ENCODE measurements at regions of chr6 and their contacts with region 1.

Region 1: GRCh38 chr6:100300221-100300736 is 164.4 kb downstream of the SIM1 start:
- DNase-seq: peak; percentile 85
- H3K4me3 ChIP-seq: no peak overlapping the region
- H3K27ac ChIP-seq: peak overlapping the region; percentile 100
- H3K4me1 ChIP-seq: peaks cover 74% of the 10 kb centered on the region
- H3K27me3 ChIP-seq: no peaks in the 10 kb centered on the region
- CTCF ChIP-seq: no peak
- POLR2A ChIP-seq: peak; percentile 29

Region 2: DNA sequence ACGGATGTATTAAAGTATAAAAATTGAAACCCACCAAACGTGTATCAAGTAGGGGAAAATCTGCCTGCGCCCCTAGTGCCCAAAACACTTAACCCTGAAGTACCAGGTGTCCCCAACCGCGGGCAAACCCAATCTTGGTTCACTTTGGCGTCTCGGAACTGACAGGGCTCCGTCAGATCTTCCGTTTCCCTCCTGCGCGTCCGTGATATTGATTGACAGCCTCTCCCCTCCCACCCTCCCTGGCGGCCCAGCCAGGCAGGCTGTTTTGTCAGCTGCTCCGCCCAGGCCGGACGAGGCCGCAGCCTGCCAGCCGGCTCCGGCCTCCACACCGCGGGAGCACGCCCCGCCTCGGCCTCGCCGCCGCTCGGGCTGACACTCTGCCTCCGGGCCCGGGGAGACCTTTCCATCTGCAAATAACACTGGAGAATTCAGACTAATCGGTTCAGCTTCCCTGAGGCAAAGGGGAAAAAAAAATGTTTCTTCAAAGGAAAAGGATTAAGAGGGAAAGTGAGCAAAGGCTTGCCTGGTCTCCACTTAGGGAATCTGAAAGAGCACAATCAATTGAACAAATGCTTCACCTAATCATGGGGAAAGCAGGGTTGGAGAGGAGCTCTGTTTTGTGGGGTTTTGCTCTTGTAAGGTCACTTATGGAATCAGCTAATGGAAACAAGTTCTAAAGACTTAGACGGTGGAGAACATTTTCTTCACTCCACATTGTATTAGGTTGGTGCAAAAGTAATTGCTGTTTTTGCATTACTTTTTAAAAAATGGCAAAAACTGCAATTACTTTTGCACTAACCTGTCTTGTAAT is 71.2 kb before region 1 on chr6:
- CTCF ChIA-PET with region 1: interaction called, 3 read pairs
- POLR2A ChIA-PET with region 1: interaction called, 4 read pairs
- dilution Hi-C with region 1: no loop called
- intact Hi-C with region 1: loop called (anchors 1 kb)
- DNase-seq: peak; percentile 86
- H3K4me3 ChIP-seq: peak overlapping the region; percentile 10 to 65 (median 28)
- H3K27ac ChIP-seq: peak overlapping the region; percentile 81
- H3K4me1 ChIP-seq: peaks cover 35% of the 10 kb centered on the region
- H3K27me3 ChIP-seq: no peaks in the 10 kb centered on the region
- CTCF ChIP-seq: no peak
- POLR2A ChIP-seq: peak; percentile 70

Region 3: DNA sequence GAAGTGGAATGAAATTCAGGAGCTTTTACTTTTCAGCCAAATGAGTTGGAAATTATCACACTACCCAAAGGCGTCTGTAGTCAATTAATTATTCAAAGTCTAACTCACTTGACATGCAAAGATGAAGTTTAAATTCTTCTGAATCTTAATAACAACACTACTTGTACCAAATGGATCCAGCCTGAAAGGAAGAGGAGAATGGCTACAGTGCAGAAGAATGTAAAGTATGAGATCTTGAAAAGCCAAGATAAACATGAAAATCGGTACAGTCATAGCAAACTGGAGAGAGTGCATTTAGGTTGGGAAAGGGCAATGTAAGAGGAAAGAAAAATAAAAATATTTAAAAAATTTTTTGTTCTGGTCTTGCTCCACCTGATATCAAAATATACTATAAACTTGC is 31.1 kb before region 1 on chr6:
- CTCF ChIA-PET with region 1: interaction called, 6 read pairs
- POLR2A ChIA-PET with region 1: no interaction called
- dilution Hi-C with region 1: no loop called
- intact Hi-C with region 1: loop called (anchors 1 kb)
- DNase-seq: peak; percentile 81
- H3K4me3 ChIP-seq: no peak overlapping the region
- H3K27ac ChIP-seq: peak overlapping the region; percentile 64
- H3K4me1 ChIP-seq: peaks cover 31% of the 10 kb centered on the region
- H3K27me3 ChIP-seq: no peaks in the 10 kb centered on the region
- CTCF ChIP-seq: no peak
- POLR2A ChIP-seq: peak; percentile 17

Region 4: DNA sequence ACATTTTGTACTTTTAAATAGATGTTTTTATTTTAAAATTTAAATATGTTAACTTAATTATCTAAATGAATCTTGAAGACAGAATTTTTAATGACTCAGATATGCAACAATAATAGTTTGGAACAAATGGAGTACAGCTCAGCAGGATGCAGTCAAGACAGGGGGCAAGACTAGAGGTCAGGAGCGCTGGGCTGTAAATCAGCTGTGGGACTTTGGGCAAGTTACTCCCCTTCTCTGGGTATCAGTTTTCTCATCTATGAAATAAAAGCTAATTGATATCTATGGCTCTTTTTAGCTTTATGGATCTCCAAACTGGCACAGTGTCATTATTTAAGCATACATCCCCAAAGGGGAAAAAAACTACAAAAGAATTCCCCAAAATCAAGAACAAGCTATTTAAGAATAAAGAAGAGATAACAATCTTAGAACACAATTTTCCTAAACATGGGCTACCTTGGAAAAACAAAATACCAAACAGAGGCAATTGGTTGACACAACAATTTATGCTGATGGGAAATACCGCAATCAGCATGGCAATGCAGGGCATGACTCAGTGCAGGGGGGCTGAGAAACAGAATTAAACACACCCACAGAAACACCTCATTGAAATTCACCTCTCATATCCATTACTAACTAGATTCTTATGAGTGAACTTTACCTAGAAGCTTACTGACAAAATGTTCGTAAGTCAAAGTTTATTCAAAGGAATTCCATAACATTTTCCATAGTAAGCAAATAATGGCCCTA is 23.8 kb before region 1 on chr6:
- CTCF ChIA-PET with region 1: interaction called, 3 read pairs
- POLR2A ChIA-PET with region 1: no interaction called
- dilution Hi-C with region 1: no loop called
- intact Hi-C with region 1: loop called (anchors 1 kb)
- DNase-seq: peak; percentile 34
- H3K4me3 ChIP-seq: no peak overlapping the region
- H3K27ac ChIP-seq: peak overlapping the region; percentile 50
- H3K4me1 ChIP-seq: peaks cover 20% of the 10 kb centered on the region
- H3K27me3 ChIP-seq: no peaks in the 10 kb centered on the region
- CTCF ChIP-seq: no peak
- POLR2A ChIP-seq: no peak

Region 5: GRCh38 chr6:101090281-101090680 is 790.0 kb after region 1 on chr6:
- CTCF ChIA-PET with region 1: no interaction called
- POLR2A ChIA-PET with region 1: no interaction called
- dilution Hi-C with region 1: no loop called
- intact Hi-C with region 1: no loop called
- DNase-seq: no peak
- H3K4me3 ChIP-seq: no peak overlapping the region
- H3K27ac ChIP-seq: no peak overlapping the region
- H3K4me1 ChIP-seq: no peaks in the 10 kb centered on the region
- H3K27me3 ChIP-seq: no peaks in the 10 kb centered on the region
- CTCF ChIP-seq: no peak
- POLR2A ChIP-seq: no peak

Measured in endothelial cell of umbilical vein (primary cell).